Activated CD4-positive, alpha-beta T cell treated with anti-CD3 and anti-CD28 coated beads, Interleukin-2, amount 10 ng/mL, durations not matched to agents 7 days and 5 days (primary cell): ENCODE measurements at regions of chr10 and their contacts with region 1.

Region 1: DNA sequence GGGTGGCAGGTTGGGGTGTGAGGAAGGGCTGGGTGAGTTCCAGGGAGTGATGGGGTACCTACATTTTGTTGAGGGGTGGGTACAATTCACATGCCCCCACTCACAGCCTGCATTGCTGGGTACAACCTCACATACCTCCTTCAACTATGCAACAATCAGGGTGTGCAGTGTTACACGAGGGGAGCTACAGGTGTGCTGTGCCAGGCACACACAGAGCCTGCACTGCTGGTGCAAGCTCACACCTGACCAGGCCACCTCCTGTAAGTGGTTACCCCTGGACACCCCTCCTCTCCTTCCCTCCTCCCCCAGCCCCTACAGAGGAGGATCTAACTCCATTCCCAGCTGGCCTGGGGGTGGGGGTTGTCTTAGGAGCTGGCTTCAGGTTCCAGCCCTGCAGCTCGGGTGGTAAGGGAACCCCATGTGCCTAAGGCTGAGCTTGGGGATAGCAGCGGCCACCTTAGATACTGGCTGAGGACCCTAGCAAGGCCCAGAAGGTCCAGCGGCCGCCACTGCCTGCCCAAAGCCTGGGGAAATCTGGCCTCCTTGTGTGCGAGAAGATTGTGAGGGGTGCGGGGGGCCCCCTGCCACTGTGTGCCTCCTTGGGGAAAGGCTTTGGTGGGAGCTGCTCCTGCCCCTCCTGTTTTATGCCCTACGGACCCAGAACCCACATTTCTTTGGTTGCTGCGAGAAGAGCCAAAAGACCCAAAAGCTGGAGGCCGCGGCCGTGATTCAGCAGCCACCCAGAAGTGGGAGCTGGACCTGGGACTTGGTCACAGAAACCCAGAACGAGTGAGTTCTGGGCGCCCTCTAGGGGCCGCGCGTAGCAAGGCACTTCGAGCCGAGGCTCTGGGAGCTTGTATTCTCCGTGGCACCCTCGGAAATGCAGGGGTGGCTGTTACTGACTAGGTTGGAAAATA is 10.8 kb downstream of the TLX1 start:
- DNase-seq: peak; percentile 80
- H3K4me3 Mint-ChIP-seq: no peak overlapping the region
- H3K27ac Mint-ChIP-seq: no peak overlapping the region
- H3K4me1 Mint-ChIP-seq: peaks cover 2% of the 10 kb centered on the region
- H3K27me3 Mint-ChIP-seq: peaks cover 90% of the 10 kb centered on the region

Region 2: GRCh38 chr10:101080933-101081931 is 60.6 kb before region 1 on chr10:
- CTCF ChIA-PET with region 1: interaction called, 10 read pairs
- POLR2A ChIA-PET with region 1: no interaction called
- DNase-seq: no peak
- H3K4me3 Mint-ChIP-seq: no peak overlapping the region
- H3K27ac Mint-ChIP-seq: no peak overlapping the region
- H3K4me1 Mint-ChIP-seq: no peaks in the 10 kb centered on the region
- H3K27me3 Mint-ChIP-seq: peaks cover 35% of the 10 kb centered on the region

Region 3: GRCh38 chr10:101101372-101101881 is 40.4 kb before region 1 on chr10:
- CTCF ChIA-PET with region 1: interaction called, 90 read pairs
- POLR2A ChIA-PET with region 1: no interaction called
- DNase-seq: no peak
- H3K4me3 Mint-ChIP-seq: no peak overlapping the region
- H3K27ac Mint-ChIP-seq: no peak overlapping the region
- H3K4me1 Mint-ChIP-seq: no peaks in the 10 kb centered on the region
- H3K27me3 Mint-ChIP-seq: peaks cover 21% of the 10 kb centered on the region

Region 4: GRCh38 chr10:101155896-101156295 is 14.0 kb after region 1 on chr10:
- CTCF ChIA-PET with region 1: interaction called, 16 read pairs
- POLR2A ChIA-PET with region 1: no interaction called
- DNase-seq: no peak
- H3K4me3 Mint-ChIP-seq: no peak overlapping the region
- H3K27ac Mint-ChIP-seq: no peak overlapping the region
- H3K4me1 Mint-ChIP-seq: no peaks in the 10 kb centered on the region
- H3K27me3 Mint-ChIP-seq: peaks cover 50% of the 10 kb centered on the region